Endothelial cell of umbilical vein (primary cell): ENCODE measurements at regions of chr19 and their contacts with region 1.

Region 1: GRCh38 chr19:50724522-50725217 is 1.5 kb downstream of the CLEC11A start:
- DNase-seq: peak; percentile 100
- H3K4me3 ChIP-seq: peak overlapping the region; percentile 40 to 84 (median 53)
- H3K27ac ChIP-seq: peak overlapping the region; percentile 32
- H3K4me1 ChIP-seq: peaks cover 22% of the 10 kb centered on the region
- H3K27me3 ChIP-seq: no peaks in the 10 kb centered on the region
- CTCF ChIP-seq: peak; percentile 79 to 90
- POLR2A ChIP-seq: peak; percentile 96

Region 2: DNA sequence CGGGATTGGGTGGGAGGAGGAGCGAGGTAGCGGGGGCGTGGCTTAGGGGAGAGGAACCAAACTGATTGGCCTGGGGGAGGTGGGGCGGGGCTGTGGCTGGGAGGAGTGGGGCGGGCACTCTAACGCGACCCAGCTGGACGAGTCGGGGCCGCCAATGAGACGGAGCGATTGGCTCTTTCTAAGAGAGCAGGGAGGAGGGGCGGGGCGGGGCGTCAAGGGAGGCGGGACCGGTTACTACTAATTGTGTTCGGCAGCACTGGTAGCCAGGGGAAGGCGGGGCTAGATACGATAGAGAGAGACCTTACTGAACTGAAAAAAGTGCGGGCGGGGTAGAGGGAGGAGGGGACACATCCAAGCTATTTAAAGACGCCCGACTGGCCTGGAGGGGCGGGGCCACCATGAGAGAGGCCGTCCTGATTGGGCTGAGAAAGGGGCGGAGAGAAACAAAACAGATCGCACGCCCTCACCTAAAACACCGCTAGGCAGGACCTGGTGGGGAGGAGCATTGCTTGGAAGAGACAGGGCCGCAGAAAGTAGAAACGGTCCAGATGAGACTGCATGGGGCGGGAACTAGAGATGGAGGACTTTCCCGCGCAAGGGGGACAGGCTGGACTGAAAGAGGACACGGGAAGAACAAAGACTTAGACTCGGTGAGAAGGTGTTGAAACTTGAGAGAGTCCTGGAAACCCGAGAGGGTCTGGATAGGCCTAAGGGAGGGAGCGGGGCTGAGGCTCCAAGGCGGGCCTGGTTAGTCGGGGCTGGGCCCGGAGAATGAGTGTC is 395.3 kb before region 1 on chr19 and contains the start of gene KCNC3:
- CTCF ChIA-PET with region 1: interaction called, 4 read pairs
- POLR2A ChIA-PET with region 1: no interaction called
- dilution Hi-C with region 1: no loop called
- intact Hi-C with region 1: loop called (anchors 5 kb)
- DNase-seq: peak; percentile 99
- H3K4me3 ChIP-seq: peak within 1 kb of the TSS; percentile 28 to 42 (median 31)
- H3K27ac ChIP-seq: no peak within 1 kb of the TSS
- H3K4me1 ChIP-seq: peaks cover 9% of the 10 kb centered on the region
- H3K27me3 ChIP-seq: peaks cover 32 to 35% of the 10 kb centered on the region in 2 experiments
- CTCF ChIP-seq: no peak
- POLR2A ChIP-seq: no peak
- total RNA-seq, gene KCNC3: 0.76 and 0.91 TPM in 2 replicates

Region 3: GRCh38 chr19:50511068-50511822 is 213.4 kb before region 1 on chr19 and contains the start of gene JOSD2:
- CTCF ChIA-PET with region 1: no interaction called
- POLR2A ChIA-PET with region 1: no interaction called
- dilution Hi-C with region 1: no loop called
- intact Hi-C with region 1: loop called (anchors 1 kb)
- DNase-seq: peak; percentile 99
- H3K4me3 ChIP-seq: peak within 1 kb of the TSS; percentile 56 to 76 (median 75)
- H3K27ac ChIP-seq: peak within 1 kb of the TSS; percentile 39
- H3K4me1 ChIP-seq: peaks cover 7% of the 10 kb centered on the region
- H3K27me3 ChIP-seq: no peaks in the 10 kb centered on the region
- CTCF ChIP-seq: no peak
- POLR2A ChIP-seq: peak; percentile 56
- total RNA-seq, gene JOSD2: 33.8 and 37.4 TPM in 2 replicates

Region 4: GRCh38 chr19:50669302-50670101 is 55.2 kb before region 1 on chr19:
- CTCF ChIA-PET with region 1: interaction called, 17 read pairs
- POLR2A ChIA-PET with region 1: no interaction called
- dilution Hi-C with region 1: no loop called
- intact Hi-C with region 1: no loop called
- DNase-seq: peak; percentile 31
- H3K4me3 ChIP-seq: no peak overlapping the region
- H3K27ac ChIP-seq: no peak overlapping the region
- H3K4me1 ChIP-seq: no peaks in the 10 kb centered on the region
- H3K27me3 ChIP-seq: peaks cover 21 to 31% of the 10 kb centered on the region in 2 experiments
- CTCF ChIP-seq: peak; percentile 75 to 76
- POLR2A ChIP-seq: no peak

Region 5: DNA sequence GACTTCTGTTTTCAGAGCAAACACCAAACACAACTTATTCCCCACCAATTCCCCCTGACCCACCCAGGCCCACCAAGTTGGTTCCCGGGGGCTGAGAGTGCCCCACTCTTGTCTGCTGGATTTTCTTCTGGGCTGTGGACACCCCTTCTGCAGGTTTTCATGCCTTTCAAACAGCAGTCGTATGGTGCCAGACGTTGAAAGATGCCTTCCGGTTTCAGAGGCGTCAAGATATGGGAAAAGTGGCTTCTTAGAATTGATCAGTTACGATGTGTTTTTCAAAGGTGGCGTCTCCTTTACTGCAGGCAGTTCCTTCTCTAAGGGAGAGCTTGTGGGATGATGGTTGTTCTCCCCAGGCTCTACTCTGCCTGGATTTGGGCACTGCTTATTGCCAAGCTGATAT is 11.2 kb after region 1 on chr19:
- CTCF ChIA-PET with region 1: interaction called, 11 read pairs
- POLR2A ChIA-PET with region 1: no interaction called
- dilution Hi-C with region 1: no loop called
- intact Hi-C with region 1: no loop called
- DNase-seq: no peak
- H3K4me3 ChIP-seq: no peak overlapping the region
- H3K27ac ChIP-seq: no peak overlapping the region
- H3K4me1 ChIP-seq: no peaks in the 10 kb centered on the region
- H3K27me3 ChIP-seq: peaks cover 6 to 11% of the 10 kb centered on the region in 2 experiments
- CTCF ChIP-seq: no peak
- POLR2A ChIP-seq: no peak

Region 6: DNA sequence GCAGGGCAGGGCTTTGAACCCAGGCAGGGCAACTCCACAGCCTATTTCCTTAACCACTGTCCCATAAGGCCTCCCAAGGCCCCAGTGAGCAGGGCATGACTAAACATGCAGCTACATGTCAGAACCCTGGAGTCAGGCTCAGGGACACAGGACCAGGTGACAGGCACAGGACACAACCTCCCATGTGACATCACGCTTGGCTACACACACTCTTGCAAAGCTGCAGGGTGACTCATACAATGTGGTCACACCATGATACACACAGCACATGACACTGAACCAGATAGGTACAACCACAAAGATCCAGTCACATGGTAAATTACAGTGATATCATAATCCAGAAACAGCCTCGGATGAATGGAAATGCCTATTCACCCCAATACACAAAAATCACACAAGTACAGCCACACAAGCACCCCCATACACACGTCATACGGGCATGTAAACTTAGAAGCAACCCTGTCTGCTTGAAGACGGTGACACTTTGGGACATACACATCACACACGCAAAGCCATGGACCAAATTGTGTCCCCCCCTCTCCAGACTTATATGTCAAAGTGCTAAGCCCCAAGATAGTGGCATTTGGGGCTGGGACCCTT is 172.0 kb after region 1 on chr19:
- CTCF ChIA-PET with region 1: no interaction called
- POLR2A ChIA-PET with region 1: no interaction called
- dilution Hi-C with region 1: no loop called
- intact Hi-C with region 1: no loop called
- DNase-seq: no peak
- H3K4me3 ChIP-seq: no peak overlapping the region
- H3K27ac ChIP-seq: no peak overlapping the region
- H3K4me1 ChIP-seq: no peaks in the 10 kb centered on the region
- H3K27me3 ChIP-seq: no peaks in the 10 kb centered on the region
- CTCF ChIP-seq: no peak
- POLR2A ChIP-seq: no peak

Region 7: DNA sequence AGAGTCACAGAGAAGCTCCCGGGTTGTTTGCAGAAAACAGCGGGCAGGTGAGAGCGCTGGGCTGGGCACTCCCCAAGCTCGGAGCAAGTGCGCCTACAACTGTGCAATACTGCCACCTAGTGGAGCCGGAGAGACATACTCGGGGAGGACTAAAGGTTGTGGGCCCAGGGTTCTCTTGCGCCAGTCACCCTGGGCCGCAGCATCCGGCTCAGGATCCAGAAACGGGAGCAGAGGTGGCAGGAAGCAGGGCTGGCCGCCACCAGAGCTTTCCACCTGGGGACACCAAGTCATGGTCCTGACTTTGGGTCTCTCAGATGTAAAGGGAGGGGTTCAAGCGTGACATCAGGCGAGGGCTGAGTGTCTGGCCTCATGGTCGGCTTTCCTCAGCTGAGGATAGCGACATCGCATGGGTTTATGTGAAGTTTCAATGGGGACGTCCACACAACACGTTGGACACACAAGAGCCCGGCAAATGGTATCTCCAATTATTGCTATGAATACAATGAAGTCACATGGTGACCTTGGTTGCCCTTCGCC is 197.7 kb after region 1 on chr19:
- CTCF ChIA-PET with region 1: interaction called, 5 read pairs
- POLR2A ChIA-PET with region 1: no interaction called
- dilution Hi-C with region 1: no loop called
- intact Hi-C with region 1: loop called (anchors 5 kb)
- DNase-seq: peak; percentile 65
- H3K4me3 ChIP-seq: no peak overlapping the region
- H3K27ac ChIP-seq: no peak overlapping the region
- H3K4me1 ChIP-seq: no peaks in the 10 kb centered on the region
- H3K27me3 ChIP-seq: peaks cover 0 to 3% of the 10 kb centered on the region in 2 experiments
- CTCF ChIP-seq: peak; percentile 83 to 84
- POLR2A ChIP-seq: no peak